ENCODE measurements at regions of chr4 and their contacts with region 1.

Region 1: DNA sequence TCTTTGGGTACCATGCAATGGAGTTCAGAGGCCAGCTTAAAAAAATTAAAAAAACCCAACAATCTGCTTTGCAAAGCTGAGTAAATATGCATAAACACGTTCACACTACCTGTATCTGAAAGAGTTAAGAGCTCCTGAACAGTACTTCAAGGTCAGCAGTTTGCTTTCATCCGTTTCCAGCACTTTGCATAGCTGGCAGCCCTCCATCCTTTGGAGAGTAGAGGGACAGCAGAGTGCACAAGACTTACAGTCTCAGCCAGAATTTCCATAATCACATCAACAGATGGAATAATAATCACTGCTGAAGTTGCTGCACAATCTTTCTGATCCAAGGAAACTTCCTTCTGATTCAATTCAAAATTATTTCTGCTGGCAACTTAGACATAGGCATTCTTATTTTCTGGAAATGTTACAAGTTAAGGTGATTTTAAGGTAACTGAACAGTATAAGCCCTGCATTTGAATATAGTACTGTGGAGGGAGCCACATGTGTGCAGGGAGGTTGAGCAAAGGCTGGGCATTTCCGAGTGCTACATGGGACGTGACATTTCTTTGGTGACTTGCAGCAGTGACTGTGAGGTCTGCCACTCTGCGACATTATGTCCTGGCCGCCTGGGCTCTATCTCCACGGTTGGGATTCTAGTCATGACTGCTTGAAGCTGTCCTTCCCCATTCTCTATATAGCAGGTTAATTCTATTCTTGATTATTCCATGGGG is 73.5 kb upstream of the EMCN start:
- DNase-seq: peak; percentile 45 to 79 (median 68)
- ATAC-seq: peak; percentile 81 to 98 (median 84)
- H3K4me3 ChIP-seq: no peak overlapping the region
- H3K27ac ChIP-seq: peak overlapping the region in 1 of 12 donors; percentile 21
- H3K4me1 ChIP-seq: peaks cover 0 to 13% (median 3%) of the 10 kb centered on the region in 12 donors
- H3K27me3 ChIP-seq: no peaks in the 10 kb centered on the region
- CTCF ChIP-seq: no peak
- POLR2A ChIP-seq: no peak

Region 2: GRCh38 chr4:100391863-100392262 is 199.5 kb before region 1 on chr4:
- intact Hi-C with region 1: no loop called
- DNase-seq: no peak
- ATAC-seq: no peak
- H3K4me3 ChIP-seq: no peak overlapping the region
- H3K27ac ChIP-seq: no peak overlapping the region
- H3K4me1 ChIP-seq: no peaks in the 10 kb centered on the region
- H3K27me3 ChIP-seq: no peaks in the 10 kb centered on the region
- CTCF ChIP-seq: no peak
- POLR2A ChIP-seq: no peak

Region 3: GRCh38 chr4:100736641-100737451 is 145.5 kb after region 1 on chr4:
- intact Hi-C with region 1: loop called in 3 of 10 experiments (anchors 2 to 5 kb)
- DNase-seq: peak in 2 of 5 donors; percentile 18
- ATAC-seq: peak; percentile 51 to 87 (median 76)
- H3K4me3 ChIP-seq: no peak overlapping the region
- H3K27ac ChIP-seq: peak overlapping the region in 9 of 12 donors; percentile 0 to 67 (median 40)
- H3K4me1 ChIP-seq: peaks cover 0 to 19% (median 8%) of the 10 kb centered on the region in 12 donors
- H3K27me3 ChIP-seq: no peaks in the 10 kb centered on the region
- CTCF ChIP-seq: no peak
- POLR2A ChIP-seq: no peak